HCT116 (cell line): ENCODE measurements at regions of chr7 and their contacts with region 1.

Region 1: DNA sequence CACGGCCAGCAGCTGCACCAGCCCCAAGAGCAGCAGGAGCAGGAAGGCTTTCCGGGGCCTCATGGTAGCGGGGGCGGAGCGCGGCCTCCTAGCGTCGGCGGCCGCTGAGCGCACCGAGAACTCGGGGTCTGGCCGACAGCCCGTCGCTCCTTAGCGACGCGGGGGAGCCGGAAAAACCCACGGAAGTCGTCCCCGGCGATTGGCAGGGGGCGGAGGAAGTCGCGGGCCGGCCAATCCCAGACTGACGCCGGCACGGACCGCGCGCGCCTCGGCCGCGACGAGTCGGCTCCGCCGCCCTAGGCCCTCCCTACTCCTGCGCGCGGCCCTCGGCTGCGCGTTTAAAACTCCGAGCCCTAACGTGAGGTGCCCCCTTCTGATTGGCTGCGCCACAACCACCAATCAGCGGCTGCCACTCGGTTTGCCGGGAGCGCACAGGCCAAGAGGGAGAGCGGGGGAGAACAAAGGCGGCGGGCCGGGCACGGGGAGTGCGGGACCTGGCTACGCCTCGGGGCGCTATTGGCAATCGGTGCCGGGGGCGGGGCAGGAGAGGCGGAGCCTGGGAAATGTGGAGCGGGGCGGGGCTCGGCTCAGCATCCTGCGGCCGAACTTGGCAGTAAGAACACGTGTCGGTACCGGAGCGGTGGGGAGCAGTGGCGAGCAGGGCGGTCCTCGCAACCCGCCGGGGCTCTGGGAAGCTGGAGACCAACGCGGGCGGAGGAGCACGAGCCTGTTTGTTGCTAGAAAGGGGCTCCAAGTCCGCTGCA is at the start of gene PDIA4:
- DNase-seq: peak; percentile 98
- ATAC-seq: peak; percentile 95
- H3K4me3 ChIP-seq: peak within 1 kb of the TSS; percentile 82 to 98
- H3K27ac ChIP-seq: peak within 1 kb of the TSS; percentile 88
- H3K4me1 ChIP-seq: peaks cover 5 to 21% of the 10 kb centered on the region in 2 experiments
- H3K27me3 ChIP-seq: no peaks in the 10 kb centered on the region
- CTCF ChIP-seq: no peak
- POLR2A ChIP-seq: peak; percentile 91
- RAD21 ChIP-seq: no peak
- total RNA-seq, gene PDIA4: 217 TPM

Region 2: GRCh38 chr7:149071641-149072437 is 43.3 kb after region 1 on chr7:
- CTCF ChIA-PET with region 1: interaction called, 7 read pairs
- POLR2A ChIA-PET with region 1: no interaction called
- RAD21 ChIA-PET with region 1: no interaction called
- intact Hi-C with region 1: loop called (anchors 5 kb)
- DNase-seq: peak; percentile 88
- ATAC-seq: peak; percentile 90
- H3K4me3 ChIP-seq: peak overlapping the region; percentile 68 to 77
- H3K27ac ChIP-seq: peak overlapping the region; percentile 77
- H3K4me1 ChIP-seq: peaks cover 4 to 24% of the 10 kb centered on the region in 2 experiments; a peak in 3 of 4 replicates
- H3K27me3 ChIP-seq: no peaks in the 10 kb centered on the region
- CTCF ChIP-seq: peak in 2 of 3 experiments; percentile 75 to 92; a peak in 4 of 6 replicates
- POLR2A ChIP-seq: no peak
- RAD21 ChIP-seq: no peak

Region 3: DNA sequence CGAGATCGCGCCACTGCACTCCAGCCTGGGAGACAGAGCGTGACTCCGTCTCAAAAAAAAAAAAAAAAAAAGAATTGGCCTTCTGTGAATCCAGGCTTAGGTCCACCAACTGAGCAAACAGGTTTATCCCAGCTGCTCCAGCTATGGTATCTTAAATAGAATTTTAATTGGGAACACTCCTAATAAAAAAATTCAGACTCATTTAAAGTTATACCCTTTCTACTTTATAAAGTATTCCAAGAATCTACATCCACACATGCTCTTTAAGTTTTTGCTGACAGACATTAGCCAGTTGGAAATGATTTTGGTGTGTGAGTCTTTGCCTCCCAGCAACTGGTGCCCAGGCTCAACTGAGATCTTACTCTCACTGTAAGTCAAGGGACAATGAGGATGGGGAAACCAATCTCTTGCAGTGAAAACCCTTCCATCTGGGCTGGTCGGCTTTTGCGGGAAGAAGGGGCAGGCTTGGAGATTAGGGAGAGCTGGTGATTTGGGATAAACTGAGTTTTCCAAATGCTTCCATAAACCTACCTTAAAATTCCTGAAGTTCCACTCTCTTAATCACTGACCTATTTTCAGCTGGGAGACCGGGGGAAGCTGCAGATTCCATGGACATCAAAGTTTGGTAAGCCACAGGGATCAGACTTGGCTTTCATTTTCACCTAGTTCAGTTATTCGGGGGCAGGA is 558.3 kb after region 1 on chr7:
- CTCF ChIA-PET with region 1: no interaction called
- POLR2A ChIA-PET with region 1: no interaction called
- RAD21 ChIA-PET with region 1: no interaction called
- intact Hi-C with region 1: no loop called
- DNase-seq: no peak
- ATAC-seq: no peak
- H3K4me3 ChIP-seq: no peak overlapping the region
- H3K27ac ChIP-seq: no peak overlapping the region
- H3K4me1 ChIP-seq: no peaks in the 10 kb centered on the region
- H3K27me3 ChIP-seq: no peaks in the 10 kb centered on the region
- CTCF ChIP-seq: no peak
- POLR2A ChIP-seq: no peak
- RAD21 ChIP-seq: no peak